HepG2 (cell line): ENCODE measurements at regions of chr4 and their contacts with region 1.

Region 1: GRCh38 chr4:53015681-53016080 is 153.6 kb downstream of the RASL11B start:
- DNase-seq: peak; percentile 66
- ATAC-seq: peak; percentile 16; the same call in 1 of the 3 replicates
- H3K4me3 ChIP-seq: no peak overlapping the region
- H3K27ac ChIP-seq: no peak overlapping the region
- H3K4me1 ChIP-seq: peaks cover 48% of the 10 kb centered on the region
- H3K27me3 ChIP-seq: no peaks in the 10 kb centered on the region
- CTCF ChIP-seq: peak; percentile 76
- EP300 ChIP-seq: no peak
- POLR2A ChIP-seq: no peak
- RAD21 ChIP-seq: peak; percentile 83

Region 2: GRCh38 chr4:53055716-53056402 is 40.2 kb after region 1 on chr4:
- CTCF ChIA-PET with region 1: no interaction called
- POLR2A ChIA-PET with region 1: interaction called, 6 read pairs
- in situ Hi-C with region 1: no loop called
- intact Hi-C with region 1: loop called (anchors 1 kb)
- DNase-seq: peak; percentile 88
- ATAC-seq: peak; percentile 95
- H3K4me3 ChIP-seq: no peak overlapping the region; a peak in 1 of 6 replicates
- H3K27ac ChIP-seq: peak overlapping the region; percentile 65
- H3K4me1 ChIP-seq: peaks cover 31% of the 10 kb centered on the region
- H3K27me3 ChIP-seq: no peaks in the 10 kb centered on the region
- CTCF ChIP-seq: no peak
- EP300 ChIP-seq: peak in 1 of 2 experiments; percentile 77; a peak in 2 of 4 replicates
- POLR2A ChIP-seq: no peak
- RAD21 ChIP-seq: no peak

Region 3: GRCh38 chr4:53189011-53189410 is 173.3 kb after region 1 on chr4:
- CTCF ChIA-PET with region 1: no interaction called
- POLR2A ChIA-PET with region 1: interaction called, 13 read pairs
- in situ Hi-C with region 1: no loop called
- intact Hi-C with region 1: loop called (anchors 2 kb)
- DNase-seq: no peak
- ATAC-seq: no peak
- H3K4me3 ChIP-seq: no peak overlapping the region
- H3K27ac ChIP-seq: peak overlapping the region; percentile 80
- H3K4me1 ChIP-seq: peaks cover 46% of the 10 kb centered on the region
- H3K27me3 ChIP-seq: no peaks in the 10 kb centered on the region
- CTCF ChIP-seq: no peak
- EP300 ChIP-seq: no peak
- POLR2A ChIP-seq: no peak
- RAD21 ChIP-seq: no peak

Region 4: GRCh38 chr4:53377319-53378170 is 361.9 kb after region 1 on chr4 and contains the start of gene FIP1L1:
- CTCF ChIA-PET with region 1: no interaction called
- POLR2A ChIA-PET with region 1: interaction called, 3 read pairs
- in situ Hi-C with region 1: loop called (anchors 10 kb)
- intact Hi-C with region 1: loop called (anchors 5 kb)
- DNase-seq: peak; percentile 83
- ATAC-seq: peak; percentile 95
- H3K4me3 ChIP-seq: peak within 1 kb of the TSS; percentile 94 to 99 (median 98)
- H3K27ac ChIP-seq: peak within 1 kb of the TSS; percentile 84
- H3K4me1 ChIP-seq: peaks cover 49% of the 10 kb centered on the region
- H3K27me3 ChIP-seq: no peaks in the 10 kb centered on the region
- CTCF ChIP-seq: 0 out of 2 replicates have a peak, but pooled peaks have one; percentile 6
- EP300 ChIP-seq: no peak
- POLR2A ChIP-seq: peak; percentile 84 to 85
- RAD21 ChIP-seq: no peak; the same call in 1 of the 2 replicates
- total RNA-seq, gene FIP1L1: 58.8 and 69.4 TPM in 2 replicates

Region 5: DNA sequence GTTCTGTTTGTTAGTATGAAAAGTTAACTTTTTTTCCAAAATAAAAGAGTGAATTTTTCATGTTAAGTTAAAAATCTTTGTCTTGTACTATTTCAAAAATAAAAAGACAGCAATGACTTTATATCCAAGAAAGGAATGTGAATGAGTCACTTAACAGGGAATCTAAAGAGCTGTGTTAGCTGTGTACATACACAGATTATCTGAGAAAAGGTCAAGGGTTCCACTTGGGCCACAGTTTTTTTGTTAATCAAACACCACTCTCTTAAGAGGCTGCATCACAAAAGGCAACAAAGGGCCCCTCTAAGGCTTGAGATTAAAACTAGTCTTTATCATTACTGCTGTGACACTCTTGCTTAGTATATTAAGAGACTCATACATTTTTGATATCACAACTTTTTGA is 443.9 kb after region 1 on chr4:
- CTCF ChIA-PET with region 1: no interaction called
- POLR2A ChIA-PET with region 1: no interaction called
- in situ Hi-C with region 1: no loop called
- intact Hi-C with region 1: loop called (anchors 1 kb)
- DNase-seq: peak; percentile 80
- ATAC-seq: peak; percentile 96
- H3K4me3 ChIP-seq: no peak overlapping the region
- H3K27ac ChIP-seq: no peak overlapping the region
- H3K4me1 ChIP-seq: peaks cover 23% of the 10 kb centered on the region
- H3K27me3 ChIP-seq: no peaks in the 10 kb centered on the region
- CTCF ChIP-seq: no peak
- EP300 ChIP-seq: 0 out of 4 replicates have a peak, but pooled peaks of 1 of the 2 experiments have one; percentile 62
- POLR2A ChIP-seq: no peak
- RAD21 ChIP-seq: no peak

Region 6: GRCh38 chr4:53804719-53805118 is 789.0 kb after region 1 on chr4:
- CTCF ChIA-PET with region 1: no interaction called
- POLR2A ChIA-PET with region 1: no interaction called
- in situ Hi-C with region 1: loop called (anchors 25 kb)
- intact Hi-C with region 1: no loop called
- DNase-seq: peak; percentile 27
- ATAC-seq: peak; percentile 71; the same call in 2 of the 3 replicates
- H3K4me3 ChIP-seq: no peak overlapping the region
- H3K27ac ChIP-seq: no peak overlapping the region
- H3K4me1 ChIP-seq: no peaks in the 10 kb centered on the region
- H3K27me3 ChIP-seq: no peaks in the 10 kb centered on the region
- CTCF ChIP-seq: peak; percentile 62
- EP300 ChIP-seq: no peak
- POLR2A ChIP-seq: no peak
- RAD21 ChIP-seq: no peak

Region 7: DNA sequence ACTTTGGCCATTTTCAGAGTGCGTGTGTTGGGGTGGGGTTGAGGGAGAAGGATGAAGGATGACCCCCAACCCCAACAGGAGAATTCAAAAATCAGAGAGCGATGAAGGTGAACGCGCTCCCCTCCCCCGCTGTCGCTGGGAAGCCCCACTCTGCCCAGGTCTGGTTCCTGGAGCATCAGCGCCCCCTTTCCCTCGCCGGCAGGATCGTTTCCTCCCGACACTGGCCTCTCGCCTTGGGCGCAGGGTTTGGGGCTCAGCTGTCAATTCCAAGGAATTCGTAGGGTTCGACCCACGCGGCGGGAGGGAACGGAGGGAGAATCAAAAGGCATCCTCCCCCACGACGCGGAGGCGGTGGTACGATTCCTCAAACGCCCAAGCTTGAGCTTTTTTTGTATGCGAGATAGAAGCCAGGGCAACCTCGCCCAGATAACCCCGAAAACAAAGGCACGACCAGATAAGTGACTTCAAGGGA is 1212.4 kb after region 1 on chr4:
- CTCF ChIA-PET with region 1: interaction called, 5 read pairs
- POLR2A ChIA-PET with region 1: interaction called, 3 read pairs
- in situ Hi-C with region 1: loop called (anchors 10 kb)
- intact Hi-C with region 1: no loop called
- DNase-seq: peak; percentile 5
- ATAC-seq: peak; percentile 55
- H3K4me3 ChIP-seq: peak overlapping the region in 1 of 3 experiments; percentile 48; a peak in 1 of 6 replicates
- H3K27ac ChIP-seq: no peak overlapping the region
- H3K4me1 ChIP-seq: peaks cover 33% of the 10 kb centered on the region
- H3K27me3 ChIP-seq: peaks cover 18 to 83% of the 10 kb centered on the region in 2 experiments
- CTCF ChIP-seq: peak; percentile 87
- EP300 ChIP-seq: no peak
- POLR2A ChIP-seq: no peak
- RAD21 ChIP-seq: peak; percentile 74